Ascending aorta (tissue), 2 donors: ENCODE measurements at regions of chr11 and their contacts with region 1.

Region 1: GRCh38 chr11:45332276-45332934 is 46.3 kb upstream of the SYT13 start:
- DNase-seq: no peak
- H3K4me3 ChIP-seq: peak overlapping the region in 1 of 2 donors; percentile 53
- H3K27ac ChIP-seq: peak overlapping the region; percentile 50 to 57
- H3K4me1 ChIP-seq: peaks cover 3 to 5% of the 10 kb centered on the region in 2 donors
- H3K27me3 ChIP-seq: no peaks in the 10 kb centered on the region
- CTCF ChIP-seq: peak; percentile 49 to 87 (median 81)

Region 2: GRCh38 chr11:44936525-44936924 is 395.9 kb before region 1 on chr11:
- intact Hi-C with region 1: loop called (anchors 5 kb)
- DNase-seq: peak; percentile 26 to 86
- H3K4me3 ChIP-seq: no peak overlapping the region
- H3K27ac ChIP-seq: no peak overlapping the region
- H3K4me1 ChIP-seq: no peaks in the 10 kb centered on the region
- H3K27me3 ChIP-seq: no peaks in the 10 kb centered on the region
- CTCF ChIP-seq: peak; percentile 93 to 95 (median 95)

Region 3: GRCh38 chr11:45110562-45110961 is 221.8 kb before region 1 on chr11:
- intact Hi-C with region 1: loop called (anchors 1 kb)
- DNase-seq: no peak
- H3K4me3 ChIP-seq: no peak overlapping the region
- H3K27ac ChIP-seq: no peak overlapping the region
- H3K4me1 ChIP-seq: no peaks in the 10 kb centered on the region
- H3K27me3 ChIP-seq: no peaks in the 10 kb centered on the region
- CTCF ChIP-seq: peak; percentile 68 to 79 (median 76)

Region 4: GRCh38 chr11:45180179-45180842 is 152.1 kb before region 1 on chr11:
- intact Hi-C with region 1: loop called (anchors 2 kb)
- DNase-seq: peak in 1 of 2 donors; percentile 78
- H3K4me3 ChIP-seq: peak overlapping the region; percentile 60 to 81
- H3K27ac ChIP-seq: peak overlapping the region; percentile 95 to 97
- H3K4me1 ChIP-seq: peaks cover 22 to 30% of the 10 kb centered on the region in 2 donors
- H3K27me3 ChIP-seq: no peaks in the 10 kb centered on the region
- CTCF ChIP-seq: peak in 2 of 3 experiments; percentile 25 to 53

Region 5: DNA sequence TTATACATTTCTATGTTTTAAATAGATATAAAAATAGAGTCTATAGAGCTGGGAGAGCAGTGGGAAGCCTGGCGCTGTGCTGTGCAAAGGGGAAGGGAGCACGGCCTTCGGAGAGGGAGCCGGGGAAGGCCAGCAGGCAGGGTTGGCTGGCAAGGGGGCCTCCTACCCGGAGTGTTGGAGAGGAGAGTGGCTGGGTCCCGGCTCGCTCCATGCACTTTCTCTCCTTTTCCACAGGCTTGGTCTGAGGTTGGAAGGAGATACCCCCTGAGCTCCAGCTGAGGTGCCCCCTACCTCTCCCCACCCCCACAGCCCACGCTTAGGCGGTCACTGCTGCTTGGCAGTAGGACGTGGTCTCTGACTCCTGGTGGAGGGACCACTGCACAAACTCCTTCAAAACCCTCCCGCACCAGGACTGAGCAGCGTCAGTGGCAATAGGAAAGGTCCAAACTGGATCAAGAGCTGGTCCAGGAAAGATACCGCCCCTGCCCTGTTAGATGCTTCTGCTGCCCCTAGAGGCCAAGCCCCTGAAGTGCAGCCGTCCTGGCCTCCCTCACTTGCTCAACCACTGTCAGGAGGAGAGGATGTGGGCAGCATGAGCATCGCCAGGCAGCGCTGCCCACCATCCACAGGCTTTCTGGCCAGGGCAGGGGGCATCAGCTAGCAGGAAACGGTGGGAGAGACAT is 99.1 kb before region 1 on chr11:
- intact Hi-C with region 1: loop called (anchors 5 kb)
- DNase-seq: peak in 1 of 2 donors; percentile 86
- H3K4me3 ChIP-seq: peak overlapping the region in 1 of 2 donors; percentile 33
- H3K27ac ChIP-seq: peak overlapping the region in 1 of 2 donors; percentile 26
- H3K4me1 ChIP-seq: peaks cover 3 to 7% of the 10 kb centered on the region in 2 donors
- H3K27me3 ChIP-seq: no peaks in the 10 kb centered on the region
- CTCF ChIP-seq: peak; percentile 58 to 85 (median 82)

Region 6: DNA sequence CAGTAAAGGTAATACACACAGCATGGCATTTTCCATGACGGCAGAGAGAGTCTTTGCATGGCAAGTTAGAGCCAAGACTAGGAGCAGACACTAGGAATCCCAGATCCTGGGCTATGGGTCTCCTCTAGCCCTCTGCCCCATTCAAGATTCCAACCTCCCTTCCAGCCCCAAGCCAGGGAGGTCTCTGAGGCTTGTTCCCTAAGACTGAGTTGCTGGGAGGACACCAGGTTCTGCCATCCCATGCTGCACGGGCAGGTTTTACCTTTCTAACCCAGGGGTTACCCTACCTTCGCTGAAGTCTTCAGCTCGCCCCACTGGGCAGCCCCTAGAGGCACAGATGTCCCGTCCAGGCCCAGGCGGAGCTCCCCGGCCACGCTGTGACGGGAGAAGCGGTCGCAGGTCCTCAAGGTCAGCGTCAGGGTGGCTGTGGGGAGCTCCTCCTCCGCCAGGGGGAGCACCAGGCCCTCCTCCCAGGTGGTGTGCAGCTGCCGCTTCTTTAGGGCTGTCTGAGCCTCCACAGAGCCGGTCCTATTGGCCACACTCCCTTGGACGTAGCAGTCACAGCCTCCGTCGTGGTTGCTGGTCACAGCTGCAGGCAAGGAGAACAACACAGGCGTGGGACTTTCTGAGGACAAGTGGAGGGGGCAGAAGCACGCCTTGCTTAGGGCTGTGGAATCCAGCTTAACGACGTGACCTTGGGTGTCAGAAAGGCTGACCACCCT is 80.1 kb before region 1 on chr11:
- intact Hi-C with region 1: loop called (anchors 5 kb)
- DNase-seq: no peak
- H3K4me3 ChIP-seq: no peak overlapping the region
- H3K27ac ChIP-seq: no peak overlapping the region
- H3K4me1 ChIP-seq: no peaks in the 10 kb centered on the region
- H3K27me3 ChIP-seq: no peaks in the 10 kb centered on the region
- CTCF ChIP-seq: peak; percentile 39 to 49 (median 44)

Region 7: GRCh38 chr11:45294499-45294898 is 37.9 kb before region 1 on chr11:
- intact Hi-C with region 1: loop called (anchors 2 kb)
- DNase-seq: no peak
- H3K4me3 ChIP-seq: no peak overlapping the region
- H3K27ac ChIP-seq: no peak overlapping the region
- H3K4me1 ChIP-seq: no peaks in the 10 kb centered on the region
- H3K27me3 ChIP-seq: no peaks in the 10 kb centered on the region
- CTCF ChIP-seq: no peak

Region 8: DNA sequence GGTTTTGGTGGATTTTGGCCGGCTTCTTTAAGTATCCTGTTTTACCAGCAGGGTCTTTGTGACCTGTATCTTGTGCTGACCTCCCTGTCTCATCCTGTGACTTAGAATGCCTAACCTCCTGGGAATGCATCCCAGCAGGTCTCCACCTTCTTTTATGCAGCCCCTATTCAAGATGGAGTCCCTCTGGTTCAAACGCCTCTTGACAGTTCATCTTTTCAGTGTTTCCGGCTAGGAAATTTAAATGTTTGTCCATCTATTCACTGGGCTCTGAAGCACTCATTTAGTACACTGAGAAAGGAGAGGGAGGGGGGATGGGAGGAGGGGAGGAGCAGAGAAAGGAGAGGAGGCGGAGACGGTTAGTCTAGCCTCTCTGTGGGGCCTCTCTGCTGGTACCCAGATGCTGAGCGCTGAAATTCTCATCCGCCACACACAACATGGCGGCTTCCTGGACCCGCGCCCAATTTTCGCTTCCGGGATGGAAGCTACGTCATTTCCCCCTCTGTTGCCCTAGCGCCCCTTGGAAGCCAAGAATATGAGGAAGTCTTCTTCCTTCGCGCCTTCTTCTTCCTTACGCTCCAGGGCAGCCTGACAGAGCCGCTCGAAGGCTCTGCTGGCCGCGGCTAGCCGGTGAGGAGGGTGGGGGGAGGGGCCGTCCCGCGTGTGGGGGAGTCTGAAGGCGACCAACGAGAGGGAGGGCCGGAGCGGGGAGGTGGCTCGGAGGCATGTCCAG is 22.7 kb after region 1 on chr11:
- intact Hi-C with region 1: no loop called
- DNase-seq: peak; percentile 33 to 88
- H3K4me3 ChIP-seq: peak overlapping the region; percentile 85 to 89
- H3K27ac ChIP-seq: peak overlapping the region; percentile 52 to 75
- H3K4me1 ChIP-seq: peaks cover 0 to 13% of the 10 kb centered on the region in 2 donors
- H3K27me3 ChIP-seq: no peaks in the 10 kb centered on the region
- CTCF ChIP-seq: no peak

Region 9: DNA sequence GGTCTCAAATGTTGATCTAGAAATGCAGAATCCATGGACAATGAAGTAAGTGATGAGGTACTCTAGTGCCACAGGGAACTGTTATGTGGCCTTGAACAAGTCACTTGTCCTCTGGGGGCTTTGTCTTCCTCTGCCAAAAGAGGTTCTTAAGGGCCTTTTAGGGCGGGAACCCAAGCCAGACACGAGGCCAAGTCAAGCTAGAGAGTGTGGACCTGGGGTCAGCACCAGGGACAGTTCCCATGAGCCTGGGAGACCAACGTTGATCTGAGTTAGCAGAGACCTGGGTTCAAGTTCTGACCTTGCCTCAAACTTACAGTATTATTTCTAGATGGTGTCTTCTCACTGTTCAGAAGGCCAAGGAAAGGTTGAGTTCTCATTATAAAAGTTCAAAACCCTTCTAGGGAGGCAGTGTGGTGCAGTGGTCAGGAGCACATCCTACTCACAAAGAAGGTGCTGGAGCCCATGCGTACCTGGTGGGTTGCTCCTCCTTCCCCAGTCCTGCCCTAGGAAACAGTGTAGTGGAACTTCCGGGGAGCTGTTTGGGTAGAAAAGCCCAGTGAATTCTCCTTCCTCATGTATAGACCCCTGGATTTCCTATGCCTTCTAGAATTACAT is 211.5 kb after region 1 on chr11:
- intact Hi-C with region 1: no loop called
- DNase-seq: no peak
- H3K4me3 ChIP-seq: no peak overlapping the region
- H3K27ac ChIP-seq: no peak overlapping the region
- H3K4me1 ChIP-seq: no peaks in the 10 kb centered on the region
- H3K27me3 ChIP-seq: no peaks in the 10 kb centered on the region
- CTCF ChIP-seq: no peak